H1 (cell line): ENCODE measurements at regions of chr2 and their contacts with region 1.

Region 1: GRCh38 chr2:120680136-120680761 is 55.4 kb upstream of the GLI2 start:
- DNase-seq: peak in 1 of 2 experiments; percentile 91
- H3K4me3 ChIP-seq: no peak overlapping the region
- H3K27ac ChIP-seq: no peak overlapping the region
- H3K4me1 ChIP-seq: no peaks in the 10 kb centered on the region
- H3K27me3 ChIP-seq: peaks cover 0 to 14% (median 6%) of the 10 kb centered on the region in 4 experiments; a peak in 3 of 7 replicates
- CTCF ChIP-seq: peak; percentile 78 to 79 (median 78)
- EP300 ChIP-seq: no peak
- POLR2A ChIP-seq: no peak
- RAD21 ChIP-seq: peak; percentile 86 to 91

Region 2: DNA sequence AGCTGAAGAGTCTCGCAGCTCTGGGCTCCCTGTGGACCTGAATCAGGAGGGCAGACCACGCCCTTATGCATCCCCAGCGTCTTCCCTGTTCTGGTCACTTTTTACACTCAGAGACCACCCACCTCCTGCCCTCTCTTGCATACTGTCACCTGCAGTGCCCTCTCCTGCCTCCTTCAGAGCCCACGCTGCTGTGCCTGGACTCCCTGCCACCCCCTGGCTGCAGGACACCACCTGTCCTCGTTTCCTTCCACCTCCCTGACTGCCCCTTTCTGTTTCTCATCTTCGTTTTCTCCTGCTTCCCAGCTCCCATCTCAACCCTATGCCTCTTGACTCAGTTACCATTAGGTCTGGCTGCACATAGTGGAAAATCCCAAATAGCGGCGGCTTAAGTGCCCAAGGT is 343.5 kb before region 1 on chr2:
- CTCF ChIA-PET with region 1: interaction called, 15 read pairs
- POLR2A ChIA-PET with region 1: no interaction called
- DNase-seq: no peak
- H3K4me3 ChIP-seq: no peak overlapping the region
- H3K27ac ChIP-seq: no peak overlapping the region
- H3K4me1 ChIP-seq: no peaks in the 10 kb centered on the region; a peak in 1 of 7 replicates
- H3K27me3 ChIP-seq: peaks cover 0 to 11% (median 5%) of the 10 kb centered on the region in 4 experiments; a peak in 5 of 7 replicates
- CTCF ChIP-seq: peak in 2 of 3 experiments; percentile 37 to 38; a peak in 3 of 4 replicates
- EP300 ChIP-seq: no peak
- POLR2A ChIP-seq: no peak
- RAD21 ChIP-seq: peak; percentile 6 to 17; a peak in 2 of 4 replicates

Region 3: GRCh38 chr2:120436885-120437603 is 243.2 kb before region 1 on chr2:
- CTCF ChIA-PET with region 1: interaction called, 18 read pairs
- POLR2A ChIA-PET with region 1: no interaction called
- DNase-seq: peak; percentile 53 to 88
- H3K4me3 ChIP-seq: no peak overlapping the region
- H3K27ac ChIP-seq: no peak overlapping the region
- H3K4me1 ChIP-seq: peaks cover 0 to 30% (median 16%) of the 10 kb centered on the region in 4 experiments; a peak in 6 of 7 replicates
- H3K27me3 ChIP-seq: peaks cover 4 to 64% (median 51%) of the 10 kb centered on the region in 4 experiments
- CTCF ChIP-seq: peak in 2 of 3 experiments; percentile 94 to 95; a peak in 3 of 4 replicates
- EP300 ChIP-seq: no peak
- POLR2A ChIP-seq: no peak
- RAD21 ChIP-seq: peak; percentile 80 to 82

Region 4: DNA sequence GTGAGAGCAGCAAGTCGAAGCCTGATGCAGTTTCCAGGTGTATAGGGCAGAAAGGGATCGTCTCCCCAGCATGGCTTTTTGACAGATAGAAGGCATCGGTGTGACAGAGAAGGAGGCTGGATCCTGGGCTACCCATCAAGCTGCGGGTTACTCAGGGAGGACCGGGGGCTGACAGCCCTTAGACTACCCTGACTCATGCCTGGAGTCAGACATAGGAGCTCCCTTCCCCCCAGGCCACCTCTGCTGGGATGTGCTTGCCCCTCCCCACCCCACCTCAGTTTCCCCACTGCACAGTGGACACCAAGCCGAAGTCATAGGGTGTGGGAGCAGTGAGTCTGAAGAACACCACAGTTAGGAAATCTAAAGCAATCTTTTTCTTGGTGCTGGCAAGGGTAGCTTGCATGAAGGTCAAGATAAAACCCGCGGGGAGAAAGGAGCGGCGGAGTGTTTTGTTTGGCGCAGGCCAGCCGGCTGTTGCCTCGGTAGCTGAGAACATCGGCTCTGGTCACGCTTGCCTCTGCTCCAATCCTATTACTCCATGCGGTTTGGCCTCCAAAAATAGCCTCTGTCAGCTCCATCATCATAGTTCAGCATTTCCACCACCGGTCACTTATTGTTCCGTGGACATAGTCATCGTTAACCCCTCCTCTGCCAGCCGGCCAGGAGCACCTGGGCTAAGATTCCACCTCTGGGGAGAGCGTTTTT is 113.8 kb before region 1 on chr2:
- CTCF ChIA-PET with region 1: interaction called, 14 read pairs
- POLR2A ChIA-PET with region 1: no interaction called
- DNase-seq: no peak
- H3K4me3 ChIP-seq: no peak overlapping the region
- H3K27ac ChIP-seq: no peak overlapping the region
- H3K4me1 ChIP-seq: peaks cover 0 to 4% (median 3%) of the 10 kb centered on the region in 4 experiments; a peak in 4 of 7 replicates
- H3K27me3 ChIP-seq: peaks cover 0 to 6% (median 3%) of the 10 kb centered on the region in 4 experiments; a peak in 3 of 7 replicates
- CTCF ChIP-seq: no peak
- EP300 ChIP-seq: no peak
- POLR2A ChIP-seq: no peak
- RAD21 ChIP-seq: no peak

Region 5: GRCh38 chr2:120605231-120605935 is 74.9 kb before region 1 on chr2:
- CTCF ChIA-PET with region 1: interaction called, 11 read pairs
- POLR2A ChIA-PET with region 1: no interaction called
- DNase-seq: no peak
- H3K4me3 ChIP-seq: no peak overlapping the region
- H3K27ac ChIP-seq: no peak overlapping the region
- H3K4me1 ChIP-seq: peaks cover 0 to 4% (median 3%) of the 10 kb centered on the region in 4 experiments; a peak in 4 of 7 replicates
- H3K27me3 ChIP-seq: peaks cover 0 to 2% (median 0%) of the 10 kb centered on the region in 4 experiments; a peak in 2 of 7 replicates
- CTCF ChIP-seq: no peak
- EP300 ChIP-seq: no peak
- POLR2A ChIP-seq: no peak
- RAD21 ChIP-seq: no peak

Region 6: DNA sequence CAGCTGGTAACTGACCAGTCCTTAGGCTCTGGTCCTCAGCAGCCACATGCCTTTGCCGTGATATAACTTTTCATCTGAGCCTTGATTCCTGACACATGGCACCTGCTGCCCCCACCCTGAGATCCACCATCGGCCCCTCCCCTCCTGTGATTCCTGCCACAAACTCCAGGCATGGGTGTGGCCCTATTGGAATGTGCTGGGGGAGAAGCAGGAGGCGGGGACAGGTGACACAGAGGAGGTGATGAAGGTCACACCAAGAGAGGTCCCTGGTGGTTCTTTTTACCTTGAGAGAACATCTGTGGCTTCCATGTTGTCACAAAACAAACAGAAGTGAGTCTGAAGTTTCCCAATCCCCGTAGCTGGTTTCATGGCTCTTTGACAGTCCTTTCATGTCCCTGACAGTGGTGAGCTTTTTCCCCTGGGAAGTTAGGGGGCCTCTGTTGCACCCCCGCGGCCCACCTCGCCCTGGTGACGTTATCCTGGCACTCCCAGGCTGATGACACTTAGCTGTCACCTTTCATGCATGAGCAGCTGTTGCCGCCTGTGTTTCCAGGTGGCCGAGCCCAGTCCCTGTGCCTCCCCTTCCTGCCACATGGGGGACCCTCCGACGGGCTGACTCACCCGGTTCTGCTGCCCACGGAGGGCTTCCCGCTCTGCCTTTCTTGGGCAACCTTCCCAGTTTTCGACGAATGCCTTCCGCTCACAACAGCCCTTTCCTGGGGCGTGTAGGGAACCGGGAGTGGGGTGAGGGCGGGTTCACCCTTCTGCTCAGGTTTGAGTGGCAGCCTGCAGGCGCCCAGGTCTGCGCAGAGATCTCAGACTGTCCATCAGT is 10.9 kb before region 1 on chr2:
- CTCF ChIA-PET with region 1: interaction called, 34 read pairs
- POLR2A ChIA-PET with region 1: no interaction called
- DNase-seq: peak in 1 of 2 experiments; percentile 78
- H3K4me3 ChIP-seq: no peak overlapping the region
- H3K27ac ChIP-seq: no peak overlapping the region
- H3K4me1 ChIP-seq: peaks cover 0 to 6% (median 0%) of the 10 kb centered on the region in 4 experiments; a peak in 2 of 7 replicates
- H3K27me3 ChIP-seq: peaks cover 0 to 22% (median 19%) of the 10 kb centered on the region in 4 experiments; a peak in 6 of 7 replicates
- CTCF ChIP-seq: peak; percentile 70 to 89 (median 86); a peak in 3 of 4 replicates
- EP300 ChIP-seq: no peak
- POLR2A ChIP-seq: no peak
- RAD21 ChIP-seq: peak; percentile 55 to 70

Region 7: GRCh38 chr2:120793677-120794403 is 113.6 kb after region 1 on chr2:
- CTCF ChIA-PET with region 1: no interaction called
- POLR2A ChIA-PET with region 1: no interaction called
- DNase-seq: no peak
- H3K4me3 ChIP-seq: no peak overlapping the region
- H3K27ac ChIP-seq: no peak overlapping the region
- H3K4me1 ChIP-seq: peaks cover 12 to 56% (median 36%) of the 10 kb centered on the region in 4 experiments
- H3K27me3 ChIP-seq: no peaks in the 10 kb centered on the region
- CTCF ChIP-seq: no peak
- EP300 ChIP-seq: no peak
- POLR2A ChIP-seq: no peak
- RAD21 ChIP-seq: no peak